ENCODE measurements at regions of chr3 and their contacts with region 1.

Region 1: GRCh38 chr3:168213920-168214319 is 118.2 kb upstream of the GOLIM4 start:
- DNase-seq: no peak
- H3K4me3 ChIP-seq: no peak overlapping the region
- H3K27ac ChIP-seq: no peak overlapping the region
- H3K4me1 ChIP-seq: no peaks in the 10 kb centered on the region
- H3K27me3 ChIP-seq: no peaks in the 10 kb centered on the region
- CTCF ChIP-seq: no peak

Region 2: GRCh38 chr3:168285506-168285905 is 71.6 kb after region 1 on chr3:
- CTCF ChIA-PET with region 1: no interaction called
- dilution Hi-C with region 1: no loop called
- in situ Hi-C with region 1: no loop called
- intact Hi-C with region 1: no loop called
- DNase-seq: no peak
- H3K4me3 ChIP-seq: no peak overlapping the region
- H3K27ac ChIP-seq: no peak overlapping the region
- H3K4me1 ChIP-seq: no peaks in the 10 kb centered on the region
- H3K27me3 ChIP-seq: peaks cover 2% of the 10 kb centered on the region
- CTCF ChIP-seq: no peak

Region 3: GRCh38 chr3:168327856-168328255 is 113.9 kb after region 1 on chr3:
- CTCF ChIA-PET with region 1: no interaction called
- dilution Hi-C with region 1: no loop called
- in situ Hi-C with region 1: no loop called
- intact Hi-C with region 1: no loop called
- DNase-seq: no peak
- H3K4me3 ChIP-seq: no peak overlapping the region
- H3K27ac ChIP-seq: no peak overlapping the region
- H3K4me1 ChIP-seq: no peaks in the 10 kb centered on the region
- H3K27me3 ChIP-seq: no peaks in the 10 kb centered on the region
- CTCF ChIP-seq: no peak

Region 4: GRCh38 chr3:168436245-168436724 is 222.4 kb after region 1 on chr3:
- CTCF ChIA-PET with region 1: no interaction called
- dilution Hi-C with region 1: no loop called
- in situ Hi-C with region 1: no loop called
- intact Hi-C with region 1: no loop called
- DNase-seq: no peak
- H3K4me3 ChIP-seq: no peak overlapping the region
- H3K27ac ChIP-seq: no peak overlapping the region
- H3K4me1 ChIP-seq: no peaks in the 10 kb centered on the region
- H3K27me3 ChIP-seq: peaks cover 4% of the 10 kb centered on the region
- CTCF ChIP-seq: no peak

Region 5: DNA sequence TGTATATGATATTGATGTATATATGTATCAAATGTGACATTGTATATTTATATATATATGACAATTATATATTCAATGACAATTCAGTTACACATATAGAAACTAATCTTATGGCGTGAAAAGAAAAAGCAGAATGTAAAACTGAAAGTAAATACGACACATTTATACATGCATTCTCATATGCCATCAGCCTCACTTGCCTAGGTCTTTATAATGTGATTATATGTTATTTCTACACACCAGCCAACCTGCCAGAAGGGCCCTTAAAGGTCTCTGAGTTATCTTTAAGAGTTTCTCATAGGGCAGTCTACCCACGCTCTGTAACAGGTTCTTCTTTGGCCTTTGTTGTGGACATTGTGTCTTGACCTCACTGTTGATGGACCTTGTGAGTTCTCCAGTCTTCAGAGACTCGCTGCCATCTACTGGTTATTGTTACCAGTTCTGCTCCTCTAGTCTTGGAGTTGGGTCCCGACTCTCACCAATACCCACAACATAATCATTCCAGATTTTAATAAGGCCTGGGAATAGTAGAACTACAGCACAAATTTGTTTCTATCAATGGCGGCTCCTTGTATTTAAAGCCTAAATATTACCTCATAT is 253.3 kb after region 1 on chr3:
- CTCF ChIA-PET with region 1: no interaction called
- dilution Hi-C with region 1: no loop called
- in situ Hi-C with region 1: no loop called
- intact Hi-C with region 1: loop called (anchors 1 kb)
- DNase-seq: peak; percentile 9
- H3K4me3 ChIP-seq: no peak overlapping the region
- H3K27ac ChIP-seq: no peak overlapping the region
- H3K4me1 ChIP-seq: no peaks in the 10 kb centered on the region
- H3K27me3 ChIP-seq: no peaks in the 10 kb centered on the region
- CTCF ChIP-seq: peak; percentile 12 to 18

Region 6: GRCh38 chr3:168511428-168512014 is 297.6 kb after region 1 on chr3:
- CTCF ChIA-PET with region 1: no interaction called
- dilution Hi-C with region 1: no loop called
- in situ Hi-C with region 1: no loop called
- intact Hi-C with region 1: loop called (anchors 2 kb)
- DNase-seq: no peak
- H3K4me3 ChIP-seq: no peak overlapping the region
- H3K27ac ChIP-seq: no peak overlapping the region
- H3K4me1 ChIP-seq: no peaks in the 10 kb centered on the region
- H3K27me3 ChIP-seq: peaks cover 2% of the 10 kb centered on the region
- CTCF ChIP-seq: peak; percentile 56 to 64

Region 7: GRCh38 chr3:168620826-168621225 is 406.9 kb after region 1 on chr3:
- CTCF ChIA-PET with region 1: no interaction called
- dilution Hi-C with region 1: no loop called
- in situ Hi-C with region 1: no loop called
- intact Hi-C with region 1: loop called (anchors 10 kb)
- DNase-seq: no peak
- H3K4me3 ChIP-seq: no peak overlapping the region
- H3K27ac ChIP-seq: no peak overlapping the region
- H3K4me1 ChIP-seq: no peaks in the 10 kb centered on the region
- H3K27me3 ChIP-seq: no peaks in the 10 kb centered on the region
- CTCF ChIP-seq: peak; percentile 34 to 36

Region 8: GRCh38 chr3:168839653-168840052 is 625.7 kb after region 1 on chr3:
- CTCF ChIA-PET with region 1: no interaction called
- dilution Hi-C with region 1: no loop called
- in situ Hi-C with region 1: loop called (anchors 5 to 10 kb)
- intact Hi-C with region 1: no loop called
- DNase-seq: no peak
- H3K4me3 ChIP-seq: no peak overlapping the region
- H3K27ac ChIP-seq: no peak overlapping the region
- H3K4me1 ChIP-seq: no peaks in the 10 kb centered on the region
- H3K27me3 ChIP-seq: peaks cover 5% of the 10 kb centered on the region
- CTCF ChIP-seq: no peak

Region 9: DNA sequence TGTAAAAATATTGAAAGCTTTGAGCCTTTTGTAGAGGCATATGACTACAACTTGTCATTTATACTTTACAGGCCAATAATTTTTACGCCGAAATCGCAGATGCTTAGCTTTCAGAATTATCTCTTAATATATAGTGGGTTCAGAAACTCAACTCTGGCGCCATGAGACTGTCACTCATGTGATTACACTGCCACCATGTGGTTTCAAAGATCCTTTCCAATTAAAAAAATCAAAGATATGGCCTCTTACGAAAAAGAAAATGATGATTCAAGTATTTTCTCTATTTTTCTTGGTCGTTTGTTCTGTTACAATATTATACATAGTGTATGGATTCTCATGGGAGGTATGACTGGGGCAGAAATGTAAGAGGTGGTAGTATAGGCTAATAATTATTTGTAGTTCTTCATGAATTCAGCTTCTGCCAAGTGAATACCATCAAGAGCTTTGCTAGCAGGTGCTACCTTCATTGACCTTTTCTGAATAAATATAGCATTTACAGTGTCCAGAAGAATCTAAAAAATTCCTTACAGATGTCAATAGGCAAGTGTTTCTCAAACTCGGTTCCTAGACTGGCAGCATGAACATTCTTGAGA is 633.5 kb after region 1 on chr3:
- CTCF ChIA-PET with region 1: interaction called, 5 read pairs
- dilution Hi-C with region 1: no loop called
- in situ Hi-C with region 1: loop called (anchors 5 to 10 kb)
- intact Hi-C with region 1: loop called (anchors 1 kb)
- DNase-seq: peak; percentile 20
- H3K4me3 ChIP-seq: no peak overlapping the region
- H3K27ac ChIP-seq: no peak overlapping the region
- H3K4me1 ChIP-seq: no peaks in the 10 kb centered on the region
- H3K27me3 ChIP-seq: peaks cover 16% of the 10 kb centered on the region
- CTCF ChIP-seq: peak; percentile 48 to 68

Measured in mammary epithelial cell (primary cell).